CD4-positive, alpha-beta T cell (primary cell): ENCODE measurements at regions of chr22 and their contacts with region 1.

Region 1: DNA sequence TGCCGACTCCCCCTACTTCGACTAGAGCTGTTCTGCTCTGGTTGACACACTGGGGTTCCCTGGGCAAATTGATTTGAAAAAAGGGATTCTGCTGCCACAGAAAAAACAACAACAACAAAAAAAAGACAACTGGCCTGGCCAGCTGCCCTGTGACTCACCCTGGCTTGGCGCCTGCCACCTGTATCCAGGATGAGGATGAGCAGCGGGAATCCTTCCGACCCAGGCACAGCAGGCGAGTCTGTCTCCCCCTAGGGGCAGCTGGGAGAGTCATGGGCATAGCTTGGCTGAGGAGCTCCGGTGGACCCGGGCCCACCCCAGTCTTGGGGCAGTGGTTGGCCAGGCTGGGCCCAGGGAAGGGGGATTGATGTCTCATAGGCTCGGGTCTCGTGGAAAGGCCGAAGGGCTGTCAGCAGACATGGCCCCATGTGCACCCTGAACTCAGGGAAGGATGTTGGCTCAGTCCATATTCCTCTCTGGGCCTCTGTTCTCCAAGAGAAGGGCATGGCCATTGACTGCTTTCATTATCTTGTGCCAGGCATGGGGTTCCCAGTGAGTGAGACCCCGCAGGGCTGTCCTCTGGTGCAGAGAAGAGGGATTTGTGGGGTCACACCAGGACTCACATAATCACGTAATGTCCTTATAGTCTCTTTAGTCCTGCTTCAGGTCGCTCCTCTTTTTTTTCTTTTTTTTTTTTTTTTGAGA is 10.4 kb upstream of the SUN2 start:
- DNase-seq: peak in 13 of 14 experiments; percentile 22 to 75 (median 40)
- ATAC-seq: peak; percentile 65
- H3K4me3 ChIP-seq: no peak overlapping the region
- H3K4me3 Mint-ChIP-seq: no peak overlapping the region
- H3K27ac ChIP-seq: no peak overlapping the region
- H3K27ac Mint-ChIP-seq: no peak overlapping the region
- H3K4me1 ChIP-seq: peaks cover 22% of the 10 kb centered on the region
- H3K4me1 Mint-ChIP-seq: peaks cover 9% of the 10 kb centered on the region
- H3K27me3 ChIP-seq: no peaks in the 10 kb centered on the region
- H3K27me3 Mint-ChIP-seq: no peaks in the 10 kb centered on the region
- CTCF ChIP-seq: peak; percentile 69

Region 2: GRCh38 chr22:38689651-38690050 is 76.6 kb before region 1 on chr22:
- CTCF ChIA-PET with region 1: no interaction called
- POLR2A ChIA-PET with region 1: no interaction called
- intact Hi-C with region 1: no loop called
- DNase-seq: no peak
- ATAC-seq: no peak
- H3K4me3 ChIP-seq: no peak overlapping the region
- H3K4me3 Mint-ChIP-seq: no peak overlapping the region
- H3K27ac ChIP-seq: no peak overlapping the region
- H3K27ac Mint-ChIP-seq: no peak overlapping the region
- H3K4me1 ChIP-seq: peaks cover 4% of the 10 kb centered on the region
- H3K4me1 Mint-ChIP-seq: peaks cover 23% of the 10 kb centered on the region
- H3K27me3 ChIP-seq: no peaks in the 10 kb centered on the region
- H3K27me3 Mint-ChIP-seq: no peaks in the 10 kb centered on the region
- CTCF ChIP-seq: no peak

Region 3: DNA sequence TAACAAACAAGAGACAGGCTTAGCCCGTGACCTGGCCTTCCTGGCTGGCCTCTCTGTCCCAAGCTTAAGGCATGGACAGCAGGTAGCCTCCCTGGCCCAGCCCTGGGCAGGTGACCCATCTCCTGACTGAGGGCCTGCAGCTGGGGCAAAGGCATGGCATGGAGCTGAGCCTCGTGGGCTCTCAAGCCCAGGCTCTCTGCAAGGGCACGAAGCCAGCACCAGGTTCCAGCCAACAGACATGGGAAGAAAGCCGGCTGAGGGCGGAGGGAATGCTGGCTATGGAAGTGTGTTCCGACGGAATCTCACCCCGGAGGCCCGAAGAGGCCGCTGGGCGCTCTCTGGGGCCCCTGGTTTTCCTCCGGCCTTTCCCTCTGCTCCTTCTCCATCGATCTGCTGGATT is 14.8 kb after region 1 on chr22:
- CTCF ChIA-PET with region 1: no interaction called
- POLR2A ChIA-PET with region 1: no interaction called
- intact Hi-C with region 1: no loop called
- DNase-seq: no peak
- ATAC-seq: no peak
- H3K4me3 ChIP-seq: no peak overlapping the region
- H3K4me3 Mint-ChIP-seq: no peak overlapping the region
- H3K27ac ChIP-seq: no peak overlapping the region
- H3K27ac Mint-ChIP-seq: no peak overlapping the region
- H3K4me1 ChIP-seq: peaks cover 3% of the 10 kb centered on the region
- H3K4me1 Mint-ChIP-seq: peaks cover 12% of the 10 kb centered on the region
- H3K27me3 ChIP-seq: no peaks in the 10 kb centered on the region
- H3K27me3 Mint-ChIP-seq: no peaks in the 10 kb centered on the region
- CTCF ChIP-seq: no peak

Region 4: DNA sequence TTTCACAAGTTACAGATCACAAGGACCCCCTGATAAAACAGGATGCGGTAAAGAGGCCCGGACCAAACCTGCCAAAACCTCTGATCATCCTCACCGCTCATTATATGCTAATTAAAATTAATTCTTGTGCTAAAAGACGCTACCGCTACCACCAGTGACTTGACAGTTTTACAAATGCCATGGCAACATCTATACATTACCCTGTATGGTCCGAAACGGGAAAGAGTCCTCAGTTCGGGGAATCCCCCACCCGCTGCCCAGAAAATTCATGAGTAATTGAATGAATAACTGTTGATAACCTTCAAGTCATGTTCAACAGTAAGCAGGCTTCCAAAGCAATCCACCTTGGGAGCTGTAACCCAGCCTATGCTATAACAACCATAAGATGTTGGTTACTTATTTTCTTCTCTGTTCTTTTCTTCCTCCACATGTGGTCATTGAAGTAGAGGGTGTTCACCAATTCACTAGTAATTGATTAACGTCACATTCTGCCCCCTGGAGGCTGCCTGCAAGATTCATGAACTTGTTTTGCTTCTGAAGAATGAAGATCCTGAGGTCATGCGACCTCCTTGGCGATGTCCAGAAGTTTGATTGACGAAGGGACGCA is 351.5 kb after region 1 on chr22:
- CTCF ChIA-PET with region 1: no interaction called
- POLR2A ChIA-PET with region 1: no interaction called
- intact Hi-C with region 1: loop called in 1 of 2 experiments (anchors 5 kb)
- DNase-seq: peak; percentile 54 to 85 (median 67)
- ATAC-seq: peak; percentile 56
- H3K4me3 ChIP-seq: peak overlapping the region; percentile 9
- H3K4me3 Mint-ChIP-seq: peak overlapping the region; percentile 27
- H3K27ac ChIP-seq: peak overlapping the region; percentile 45 to 49
- H3K27ac Mint-ChIP-seq: peak overlapping the region; percentile 67
- H3K4me1 ChIP-seq: peaks cover 29% of the 10 kb centered on the region
- H3K4me1 Mint-ChIP-seq: peaks cover 21% of the 10 kb centered on the region
- H3K27me3 ChIP-seq: no peaks in the 10 kb centered on the region
- H3K27me3 Mint-ChIP-seq: no peaks in the 10 kb centered on the region
- CTCF ChIP-seq: peak; percentile 81